Activated CD4-positive, alpha-beta memory T cell treated with anti-CD3 and anti-CD28 coated beads, Interleukin-2, amount 10 ng/mL, durations not matched to agents 7 days and 5 days (primary cell): ENCODE measurements at regions of chr1 and their contacts with region 1.

Region 1: DNA sequence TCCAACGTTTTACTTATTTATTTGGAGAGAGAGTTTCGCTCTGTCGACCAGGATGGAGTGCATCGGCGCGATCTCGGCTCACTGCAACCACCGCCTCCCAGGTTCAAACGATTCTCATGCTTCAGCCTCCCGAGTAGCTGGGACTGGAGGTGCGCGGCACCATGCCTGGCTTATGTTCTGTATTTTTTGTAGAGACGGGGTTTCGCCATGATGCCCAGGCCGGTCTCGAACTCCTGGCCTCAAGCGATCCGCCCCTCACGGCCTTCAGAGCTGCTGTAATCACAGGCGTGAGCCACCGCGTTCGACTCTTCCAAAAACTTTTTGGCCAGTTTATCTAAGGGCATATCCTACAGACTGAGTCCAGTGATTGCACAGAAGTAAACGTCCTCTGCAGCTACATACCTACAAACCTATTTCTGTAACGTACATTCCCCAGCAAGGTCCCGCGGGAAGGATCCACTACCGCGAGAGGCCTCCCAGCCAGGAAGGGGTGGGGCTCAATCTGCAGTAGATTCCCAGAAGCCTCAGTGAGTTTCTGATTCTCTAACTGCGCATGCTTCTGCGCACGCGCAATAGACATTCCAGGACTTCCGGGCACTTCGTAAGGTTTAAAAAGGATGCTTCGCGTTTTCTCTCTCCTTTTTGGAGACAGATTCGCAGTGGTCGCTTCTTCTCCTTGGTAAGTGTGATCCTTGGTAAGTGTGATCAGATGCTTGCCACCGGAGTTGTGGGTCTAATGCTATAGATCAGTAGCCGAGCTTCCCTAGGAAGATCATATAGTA is at the start of gene RCC1:
- DNase-seq: peak; percentile 97
- H3K4me3 Mint-ChIP-seq: peak within 1 kb of the TSS; percentile 98
- H3K27ac Mint-ChIP-seq: peak within 1 kb of the TSS; percentile 97
- H3K4me1 Mint-ChIP-seq: peaks cover 42% of the 10 kb centered on the region
- H3K27me3 Mint-ChIP-seq: no peaks in the 10 kb centered on the region
- total RNA-seq, gene RCC1: 47.6 to 50.7 TPM

Region 2: DNA sequence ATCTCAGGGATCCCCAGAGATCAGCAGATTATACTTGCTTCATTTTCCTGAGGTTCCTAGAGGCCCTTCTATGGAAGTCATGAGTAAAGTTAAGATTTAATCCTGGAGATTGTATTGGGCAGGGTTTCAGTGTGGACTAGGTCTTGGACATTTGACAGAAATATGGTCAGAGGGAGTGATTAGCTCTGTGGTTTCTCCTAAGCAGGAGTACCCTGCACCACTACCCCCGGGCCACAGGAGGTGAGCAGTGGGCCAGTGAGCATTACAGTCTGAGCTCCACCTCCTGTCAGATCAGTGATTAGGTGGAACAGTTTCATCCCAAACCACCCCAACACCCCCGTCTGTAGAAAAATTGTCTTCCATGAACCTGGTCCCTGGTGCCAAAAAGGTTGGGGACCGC is 92.9 kb before region 1 on chr1:
- CTCF ChIA-PET with region 1: interaction called, 9 read pairs
- POLR2A ChIA-PET with region 1: interaction called, 10 read pairs
- DNase-seq: no peak
- H3K4me3 Mint-ChIP-seq: no peak overlapping the region
- H3K27ac Mint-ChIP-seq: no peak overlapping the region
- H3K4me1 Mint-ChIP-seq: peaks cover 11% of the 10 kb centered on the region
- H3K27me3 Mint-ChIP-seq: no peaks in the 10 kb centered on the region

Region 3: GRCh38 chr1:28518000-28518744 is 12.6 kb after region 1 on chr1:
- CTCF ChIA-PET with region 1: interaction called, 5 read pairs
- POLR2A ChIA-PET with region 1: interaction called, 103 read pairs
- DNase-seq: peak; percentile 90
- H3K4me3 Mint-ChIP-seq: peak overlapping the region; percentile 86
- H3K27ac Mint-ChIP-seq: peak overlapping the region; percentile 80
- H3K4me1 Mint-ChIP-seq: peaks cover 55% of the 10 kb centered on the region
- H3K27me3 Mint-ChIP-seq: no peaks in the 10 kb centered on the region

Region 4: GRCh38 chr1:28530456-28530855 is 24.9 kb after region 1 on chr1:
- CTCF ChIA-PET with region 1: no interaction called
- POLR2A ChIA-PET with region 1: no interaction called
- DNase-seq: no peak
- H3K4me3 Mint-ChIP-seq: no peak overlapping the region
- H3K27ac Mint-ChIP-seq: no peak overlapping the region
- H3K4me1 Mint-ChIP-seq: no peaks in the 10 kb centered on the region
- H3K27me3 Mint-ChIP-seq: no peaks in the 10 kb centered on the region

Region 5: DNA sequence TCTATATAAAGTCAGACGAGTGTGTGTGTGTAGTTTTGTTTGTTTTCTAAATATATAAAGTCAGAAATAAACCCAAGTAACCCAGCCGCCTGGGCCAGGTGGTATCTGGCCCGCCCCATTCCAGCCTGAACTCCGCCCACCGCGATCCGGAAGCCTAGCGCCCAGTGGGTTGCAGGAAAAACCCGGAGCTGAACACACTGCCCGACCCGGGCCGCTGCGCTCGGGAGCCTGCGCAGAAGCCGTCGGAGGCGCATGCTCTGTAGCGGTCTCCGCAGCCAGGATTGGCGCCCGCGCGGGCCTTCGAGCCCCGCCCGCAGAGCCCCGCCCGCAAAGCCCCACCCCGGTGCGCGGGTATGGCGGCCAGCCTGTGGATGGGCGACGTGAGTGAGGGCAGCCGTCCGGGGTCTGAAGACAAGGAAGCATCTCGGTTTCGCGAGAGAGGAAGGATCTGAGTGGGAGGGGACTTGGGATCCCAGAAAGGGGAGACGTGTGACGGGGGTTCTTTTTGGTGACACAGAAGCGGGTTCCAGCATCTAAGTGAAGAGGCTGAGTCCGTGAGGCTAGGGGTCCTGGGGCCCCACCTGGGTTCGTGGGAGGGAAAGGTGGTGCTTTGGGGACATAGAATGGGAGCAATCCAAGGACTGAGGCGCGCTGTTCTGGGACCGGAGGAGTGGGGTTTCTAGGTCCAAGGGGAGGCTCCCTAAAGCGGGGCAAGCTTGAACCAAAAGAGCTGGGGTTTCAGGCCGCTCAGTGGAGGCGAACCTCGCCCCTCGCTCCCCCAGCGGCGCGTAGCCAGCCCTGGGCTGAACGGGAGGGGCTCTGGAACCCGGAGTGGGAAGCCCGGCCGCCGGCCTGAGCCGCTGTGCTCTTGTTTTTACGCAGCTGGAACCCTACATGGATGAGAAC is 47.4 kb after region 1 on chr1 and contains the start of gene TRNAU1AP:
- CTCF ChIA-PET with region 1: interaction called, 5 read pairs
- POLR2A ChIA-PET with region 1: interaction called, 56 read pairs
- DNase-seq: peak; percentile 98
- H3K4me3 Mint-ChIP-seq: peak within 1 kb of the TSS; percentile 92
- H3K27ac Mint-ChIP-seq: peak within 1 kb of the TSS; percentile 91
- H3K4me1 Mint-ChIP-seq: peaks cover 29% of the 10 kb centered on the region
- H3K27me3 Mint-ChIP-seq: no peaks in the 10 kb centered on the region
- total RNA-seq, gene TRNAU1AP: 56.9 to 58.9 TPM

Region 6: DNA sequence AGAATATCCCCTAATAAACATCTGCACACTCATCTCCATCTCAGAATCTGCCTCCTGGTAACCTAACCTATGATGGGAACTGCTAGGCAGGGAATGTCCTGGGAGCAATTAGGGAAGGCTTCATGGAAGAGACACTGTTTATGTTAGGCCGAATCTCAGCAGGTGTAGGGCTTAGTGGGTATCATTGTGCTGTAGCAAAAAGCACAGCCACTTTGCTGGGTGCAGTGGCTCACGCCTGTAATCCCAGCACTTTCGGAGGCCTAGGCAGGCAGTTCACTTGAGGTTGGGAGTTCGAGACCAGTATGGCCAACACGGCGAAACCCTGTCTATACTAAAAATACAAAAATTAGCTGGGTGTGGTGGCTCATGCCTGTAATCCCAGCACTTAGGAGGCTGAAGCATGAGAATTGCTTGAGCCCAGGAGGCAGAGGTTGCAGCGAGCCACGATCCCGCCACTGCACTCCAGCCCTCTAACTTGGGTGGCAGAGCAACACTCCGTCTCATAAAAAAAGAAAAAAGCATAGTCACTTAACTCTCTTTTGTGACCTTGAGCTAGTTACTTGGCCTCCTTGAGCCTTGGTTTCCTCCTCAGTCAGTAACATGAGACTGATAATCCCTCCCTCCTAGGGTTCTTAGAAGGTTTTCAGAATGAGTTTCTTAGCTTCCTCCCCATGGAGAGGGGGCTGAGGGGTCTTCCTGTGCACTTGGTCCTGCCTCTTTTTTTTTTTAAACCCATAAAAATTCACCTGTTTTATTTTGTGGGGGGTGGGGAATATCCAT is 90.0 kb after region 1 on chr1:
- CTCF ChIA-PET with region 1: no interaction called
- POLR2A ChIA-PET with region 1: no interaction called
- DNase-seq: no peak
- H3K4me3 Mint-ChIP-seq: no peak overlapping the region
- H3K27ac Mint-ChIP-seq: no peak overlapping the region
- H3K4me1 Mint-ChIP-seq: peaks cover 15% of the 10 kb centered on the region
- H3K27me3 Mint-ChIP-seq: peaks cover 9% of the 10 kb centered on the region

Region 7: GRCh38 chr1:28642847-28643635 is 137.4 kb after region 1 on chr1 and contains the start of gene TAF12:
- CTCF ChIA-PET with region 1: interaction called, 3 read pairs
- POLR2A ChIA-PET with region 1: interaction called, 58 read pairs
- DNase-seq: peak; percentile 95
- H3K4me3 Mint-ChIP-seq: peak within 1 kb of the TSS; percentile 96
- H3K27ac Mint-ChIP-seq: peak within 1 kb of the TSS; percentile 96
- H3K4me1 Mint-ChIP-seq: peaks cover 54% of the 10 kb centered on the region
- H3K27me3 Mint-ChIP-seq: no peaks in the 10 kb centered on the region
- total RNA-seq, gene TAF12: 33.8 to 34.0 TPM